ENCODE measurements at regions of chr12 and their contacts with region 1.

Region 1: GRCh38 chr12:116916714-116917114 is 6.0 kb downstream of the FBXW8 start:
- DNase-seq: peak; percentile 90
- ATAC-seq: peak; percentile 72
- H3K4me3 ChIP-seq: peak overlapping the region; percentile 46
- H3K27ac ChIP-seq: peak overlapping the region; percentile 89
- H3K4me1 ChIP-seq: peaks cover 54% of the 10 kb centered on the region
- H3K27me3 ChIP-seq: no peaks in the 10 kb centered on the region
- CTCF ChIP-seq: peak; percentile 66

Region 2: DNA sequence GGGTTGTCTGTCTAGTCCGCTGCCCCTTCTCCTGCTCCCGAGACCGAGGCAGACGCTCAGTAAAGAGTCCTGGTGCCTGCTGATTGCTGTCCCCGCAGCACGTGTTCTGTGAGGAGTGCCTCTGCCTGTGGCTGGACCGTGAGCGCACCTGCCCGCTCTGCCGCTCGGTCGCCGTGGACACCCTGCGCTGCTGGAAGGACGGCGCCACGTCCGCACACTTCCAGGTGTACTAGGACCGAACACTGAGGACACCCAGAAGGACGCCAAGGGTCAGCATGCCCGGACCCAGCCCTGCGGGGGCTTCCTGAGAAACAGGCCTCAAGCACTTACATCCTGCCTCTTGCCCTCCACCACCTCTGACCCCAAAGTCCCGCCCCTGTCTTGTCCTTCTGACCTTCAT is 67.5 kb before region 1 on chr12:
- CTCF ChIA-PET with region 1: no interaction called
- POLR2A ChIA-PET with region 1: no interaction called
- intact Hi-C with region 1: no loop called
- DNase-seq: no peak
- ATAC-seq: no peak
- H3K4me3 ChIP-seq: no peak overlapping the region
- H3K27ac ChIP-seq: no peak overlapping the region
- H3K4me1 ChIP-seq: no peaks in the 10 kb centered on the region
- H3K27me3 ChIP-seq: no peaks in the 10 kb centered on the region
- CTCF ChIP-seq: no peak

Region 3: GRCh38 chr12:116861320-116861719 is 55.4 kb before region 1 on chr12:
- CTCF ChIA-PET with region 1: no interaction called
- POLR2A ChIA-PET with region 1: no interaction called
- intact Hi-C with region 1: loop called (anchors 5 kb)
- DNase-seq: peak; percentile 54
- ATAC-seq: peak; percentile 58
- H3K4me3 ChIP-seq: no peak overlapping the region
- H3K27ac ChIP-seq: no peak overlapping the region
- H3K4me1 ChIP-seq: peaks cover 25% of the 10 kb centered on the region
- H3K27me3 ChIP-seq: no peaks in the 10 kb centered on the region
- CTCF ChIP-seq: no peak

Region 4: DNA sequence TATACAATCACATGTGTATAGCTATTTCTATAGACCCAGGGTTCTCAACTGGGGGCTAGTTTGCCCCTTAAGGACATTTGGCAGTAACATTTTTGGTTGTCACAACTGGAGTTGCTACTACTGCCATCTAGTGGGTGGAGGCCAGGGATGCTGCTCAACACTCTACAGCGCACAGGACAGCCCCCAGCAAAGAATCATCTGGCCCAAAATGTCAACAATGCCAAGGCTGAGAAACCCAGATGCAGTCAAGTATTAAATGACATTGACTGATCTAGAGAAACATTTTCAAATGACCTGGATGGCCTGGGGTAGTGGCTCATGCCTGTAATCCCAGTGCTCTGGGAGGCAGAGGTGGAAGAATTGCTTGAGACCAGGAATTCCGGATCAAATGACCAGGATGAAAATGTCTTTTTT is 1138.4 kb after region 1 on chr12:
- CTCF ChIA-PET with region 1: no interaction called
- POLR2A ChIA-PET with region 1: no interaction called
- intact Hi-C with region 1: loop called (anchors 5 kb)
- DNase-seq: peak; percentile 78
- ATAC-seq: no peak
- H3K4me3 ChIP-seq: no peak overlapping the region
- H3K27ac ChIP-seq: no peak overlapping the region
- H3K4me1 ChIP-seq: peaks cover 64% of the 10 kb centered on the region
- H3K27me3 ChIP-seq: no peaks in the 10 kb centered on the region
- CTCF ChIP-seq: peak; percentile 91

Measured in PC-3 (cell line).